HepG2 (cell line): ENCODE measurements at regions of chr6 and their contacts with region 1.

Region 1: DNA sequence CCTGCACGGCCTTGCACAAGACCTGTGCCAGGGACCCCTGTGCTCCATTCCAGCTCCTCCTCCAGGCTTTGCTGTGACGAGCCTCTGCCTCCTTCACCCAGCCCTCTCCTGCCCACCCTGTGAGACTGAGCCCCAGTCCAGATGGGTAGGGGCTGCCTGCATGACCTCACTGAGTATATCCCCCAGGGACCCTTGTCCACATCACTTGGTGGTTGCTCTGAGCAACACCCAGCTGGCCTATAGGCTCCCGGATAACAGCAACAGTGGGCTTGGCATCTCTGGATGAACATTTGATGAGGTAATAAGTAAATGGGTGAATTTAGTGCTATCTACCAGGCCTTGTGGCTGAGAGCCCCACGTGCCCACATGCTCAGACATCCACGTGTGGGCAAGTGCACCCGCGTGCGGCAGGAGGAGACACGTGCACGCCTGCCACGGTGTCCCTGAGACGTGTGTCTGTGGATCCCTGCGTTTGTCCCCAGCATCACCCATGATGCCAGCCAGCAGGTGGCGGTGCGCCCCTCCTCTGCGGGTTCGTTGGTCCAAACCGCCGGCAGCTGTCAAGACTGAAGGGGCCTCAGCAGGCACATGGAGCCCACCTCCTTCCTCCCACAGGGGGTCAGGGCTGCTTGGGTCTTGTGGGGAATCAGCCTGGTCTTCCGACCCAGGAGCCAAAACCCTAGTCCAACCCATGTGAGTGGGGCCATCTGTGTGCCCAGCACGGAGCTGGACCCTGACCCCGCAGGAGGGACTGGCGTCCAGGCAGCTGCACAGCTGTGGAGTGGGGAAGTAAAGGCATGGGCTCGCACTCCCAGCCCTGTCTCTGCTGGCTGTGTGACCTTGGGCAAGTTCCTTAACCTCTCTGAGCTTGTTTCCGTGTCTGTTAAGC is 45.9 kb downstream of the FGD2 start:
- DNase-seq: peak; percentile 70
- ATAC-seq: peak; percentile 82
- H3K4me3 ChIP-seq: peak overlapping the region in 2 of 3 experiments; percentile 12 to 64; a peak in 3 of 6 replicates
- H3K27ac ChIP-seq: no peak overlapping the region
- H3K4me1 ChIP-seq: peaks cover 78% of the 10 kb centered on the region
- H3K27me3 ChIP-seq: peaks cover 2 to 17% of the 10 kb centered on the region in 2 experiments; a peak in 4 of 5 replicates
- CTCF ChIP-seq: peak; percentile 100
- EP300 ChIP-seq: no peak
- POLR2A ChIP-seq: no peak
- RAD21 ChIP-seq: peak; percentile 100

Region 2: GRCh38 chr6:37029249-37029971 is 22.0 kb before region 1 on chr6:
- CTCF ChIA-PET with region 1: interaction called, 7 read pairs
- POLR2A ChIA-PET with region 1: interaction called, 4 read pairs
- in situ Hi-C with region 1: no loop called
- intact Hi-C with region 1: loop called (anchors 2 kb)
- DNase-seq: peak; percentile 84
- ATAC-seq: peak; percentile 89
- H3K4me3 ChIP-seq: no peak overlapping the region
- H3K27ac ChIP-seq: no peak overlapping the region
- H3K4me1 ChIP-seq: peaks cover 43% of the 10 kb centered on the region
- H3K27me3 ChIP-seq: peaks cover 4 to 47% of the 10 kb centered on the region in 2 experiments
- CTCF ChIP-seq: peak; percentile 97
- EP300 ChIP-seq: no peak; a peak in 1 of 4 replicates
- POLR2A ChIP-seq: no peak
- RAD21 ChIP-seq: peak; percentile 99

Region 3: GRCh38 chr6:37177077-37177934 is 125.9 kb after region 1 on chr6:
- CTCF ChIA-PET with region 1: interaction called, 72 read pairs
- POLR2A ChIA-PET with region 1: interaction called, 119 read pairs
- in situ Hi-C with region 1: loop called (anchors 5 kb)
- intact Hi-C with region 1: loop called (anchors 1 kb)
- DNase-seq: no peak
- ATAC-seq: peak; percentile 73
- H3K4me3 ChIP-seq: no peak overlapping the region
- H3K27ac ChIP-seq: no peak overlapping the region
- H3K4me1 ChIP-seq: peaks cover 24% of the 10 kb centered on the region
- H3K27me3 ChIP-seq: no peaks in the 10 kb centered on the region; a peak in 1 of 5 replicates
- CTCF ChIP-seq: peak; percentile 41
- EP300 ChIP-seq: no peak
- POLR2A ChIP-seq: no peak
- RAD21 ChIP-seq: no peak

Region 4: DNA sequence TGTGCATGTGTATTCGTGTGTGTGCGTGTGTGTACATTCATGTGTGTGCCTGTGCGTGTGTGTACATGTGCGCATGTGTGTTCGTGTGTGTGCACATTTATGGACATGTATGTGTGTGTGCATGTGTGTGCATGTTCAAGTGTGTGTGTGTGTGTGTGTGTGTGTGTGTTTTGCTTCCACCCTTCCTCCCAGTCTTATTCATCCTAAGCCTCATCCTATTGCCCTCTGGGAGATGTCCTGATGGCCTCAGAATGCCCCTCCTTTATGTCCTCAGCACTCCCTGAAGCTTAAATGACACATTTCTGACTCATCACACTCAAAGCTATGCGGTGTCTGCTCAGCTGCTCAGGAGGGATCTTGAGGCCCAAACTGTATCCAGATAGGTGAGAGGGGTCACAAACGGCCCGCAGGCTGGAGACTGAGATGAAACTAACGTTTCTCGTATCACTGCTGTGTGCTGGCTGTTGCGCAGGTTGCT is 525.0 kb after region 1 on chr6:
- CTCF ChIA-PET with region 1: no interaction called
- POLR2A ChIA-PET with region 1: no interaction called
- in situ Hi-C with region 1: no loop called
- intact Hi-C with region 1: no loop called
- DNase-seq: no peak
- ATAC-seq: no peak
- H3K4me3 ChIP-seq: no peak overlapping the region
- H3K27ac ChIP-seq: no peak overlapping the region
- H3K4me1 ChIP-seq: no peaks in the 10 kb centered on the region
- H3K27me3 ChIP-seq: peaks cover 2 to 50% of the 10 kb centered on the region in 2 experiments; a peak in 4 of 5 replicates
- CTCF ChIP-seq: no peak
- EP300 ChIP-seq: no peak
- POLR2A ChIP-seq: no peak
- RAD21 ChIP-seq: no peak